AG04450 (cell line): ENCODE measurements at regions of chr5 and their contacts with region 1.

Region 1: GRCh38 chr5:10452768-10453331 is 11.2 kb downstream of the ROPN1L start:
- DNase-seq: peak; percentile 74
- H3K4me3 ChIP-seq: no peak overlapping the region
- H3K27ac ChIP-seq: no peak overlapping the region
- H3K27me3 ChIP-seq: no peaks in the 10 kb centered on the region
- CTCF ChIP-seq: peak; percentile 82

Region 2: GRCh38 chr5:10441083-10441991 is 11.5 kb before region 1 on chr5 and contains the start of gene ROPN1L:
- CTCF ChIA-PET with region 1: interaction called, 16 read pairs
- POLR2A ChIA-PET with region 1: no interaction called
- DNase-seq: peak; percentile 56
- H3K4me3 ChIP-seq: peak within 1 kb of the TSS; percentile 73
- H3K27ac ChIP-seq: peak within 1 kb of the TSS; percentile 66
- H3K27me3 ChIP-seq: no peaks in the 10 kb centered on the region
- CTCF ChIP-seq: no peak
- polyA plus RNA-seq, gene ROPN1L: 0.24 and 0.29 TPM in 2 replicates

Region 3: DNA sequence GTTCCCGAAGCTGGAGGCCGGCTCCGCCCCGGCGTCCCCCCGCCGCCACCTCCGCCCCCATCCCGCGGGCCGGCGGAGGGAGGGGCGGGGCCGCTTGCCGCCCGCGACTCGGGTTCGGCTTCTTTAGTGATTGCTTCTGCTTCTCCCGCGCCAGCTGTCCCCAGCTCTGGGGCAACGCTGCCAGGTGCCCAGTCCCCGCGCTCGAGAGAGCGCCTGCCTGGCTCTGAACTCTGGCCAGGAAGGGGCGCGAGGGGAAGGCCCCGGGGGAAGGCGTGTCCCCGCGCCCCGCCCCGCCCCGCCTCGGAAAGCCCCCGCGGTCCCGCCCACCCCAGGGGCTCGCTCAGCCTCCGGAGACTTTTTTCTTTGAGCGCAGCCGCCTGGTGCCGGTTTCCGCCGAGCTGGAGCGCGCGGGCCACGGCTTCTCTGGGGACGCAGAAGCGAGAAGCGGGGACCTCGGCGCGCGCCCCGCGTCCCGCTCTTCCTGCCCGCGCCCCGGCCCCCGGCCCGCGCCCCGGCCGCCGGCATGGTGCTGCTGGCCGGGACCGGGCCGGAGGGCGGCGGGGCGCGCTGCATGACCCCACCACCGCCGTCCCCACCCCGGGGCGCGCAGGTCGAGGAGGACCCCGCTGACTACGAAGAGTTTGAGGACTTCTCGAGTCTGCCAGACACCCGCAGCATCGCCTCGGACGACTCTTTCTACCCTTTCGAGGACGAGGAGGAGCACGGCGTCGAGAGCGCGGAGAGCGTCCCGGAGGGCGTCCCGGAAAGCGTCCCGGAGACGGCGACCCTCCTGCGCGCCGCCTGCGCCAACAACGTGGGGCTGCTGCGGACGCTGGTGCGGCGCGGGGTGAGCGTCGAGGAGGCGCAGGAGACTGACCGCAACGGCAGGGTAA is 111.3 kb after region 1 on chr5 and contains the start of gene ANKRD33B:
- CTCF ChIA-PET with region 1: interaction called, 12 read pairs
- POLR2A ChIA-PET with region 1: no interaction called
- DNase-seq: no peak
- H3K4me3 ChIP-seq: peak within 1 kb of the TSS; percentile 90
- H3K27ac ChIP-seq: peak within 1 kb of the TSS; percentile 65
- H3K27me3 ChIP-seq: no peaks in the 10 kb centered on the region
- CTCF ChIP-seq: no peak
- polyA plus RNA-seq, gene ANKRD33B: 4.6 and 4.8 TPM in 2 replicates

Region 4: DNA sequence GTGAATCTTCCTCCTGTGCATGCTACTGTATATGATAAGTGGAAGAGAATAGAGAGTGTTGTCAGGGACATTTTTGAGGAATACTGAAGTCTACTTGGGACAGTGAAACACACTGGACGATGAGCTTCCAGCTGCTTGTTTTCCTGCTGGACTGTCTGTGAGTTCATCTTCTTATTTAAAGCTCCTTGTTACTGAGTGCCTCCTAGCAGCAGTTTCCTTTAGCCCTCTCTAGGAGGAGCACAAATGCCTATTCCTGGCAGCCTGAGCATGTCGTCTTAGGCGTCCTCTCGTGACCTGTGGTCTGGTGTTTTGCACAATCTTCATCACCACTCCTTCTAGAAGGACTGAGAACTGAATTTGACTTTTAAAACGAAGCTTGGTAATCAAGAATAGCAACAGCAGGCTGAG is 154.8 kb after region 1 on chr5:
- CTCF ChIA-PET with region 1: interaction called, 10 read pairs
- POLR2A ChIA-PET with region 1: no interaction called
- DNase-seq: no peak
- H3K4me3 ChIP-seq: no peak overlapping the region
- H3K27ac ChIP-seq: peak overlapping the region; percentile 52
- H3K27me3 ChIP-seq: no peaks in the 10 kb centered on the region
- CTCF ChIP-seq: peak; percentile 37

Region 5: GRCh38 chr5:10635257-10635866 is 182.5 kb after region 1 on chr5:
- CTCF ChIA-PET with region 1: interaction called, 162 read pairs
- POLR2A ChIA-PET with region 1: no interaction called
- DNase-seq: no peak
- H3K4me3 ChIP-seq: no peak overlapping the region
- H3K27ac ChIP-seq: peak overlapping the region; percentile 31
- H3K27me3 ChIP-seq: no peaks in the 10 kb centered on the region
- CTCF ChIP-seq: no peak

Region 6: GRCh38 chr5:10689391-10690081 is 236.7 kb after region 1 on chr5:
- CTCF ChIA-PET with region 1: interaction called, 37 read pairs
- POLR2A ChIA-PET with region 1: no interaction called
- DNase-seq: no peak
- H3K4me3 ChIP-seq: no peak overlapping the region
- H3K27ac ChIP-seq: no peak overlapping the region
- H3K27me3 ChIP-seq: no peaks in the 10 kb centered on the region
- CTCF ChIP-seq: peak; percentile 37

Region 7: DNA sequence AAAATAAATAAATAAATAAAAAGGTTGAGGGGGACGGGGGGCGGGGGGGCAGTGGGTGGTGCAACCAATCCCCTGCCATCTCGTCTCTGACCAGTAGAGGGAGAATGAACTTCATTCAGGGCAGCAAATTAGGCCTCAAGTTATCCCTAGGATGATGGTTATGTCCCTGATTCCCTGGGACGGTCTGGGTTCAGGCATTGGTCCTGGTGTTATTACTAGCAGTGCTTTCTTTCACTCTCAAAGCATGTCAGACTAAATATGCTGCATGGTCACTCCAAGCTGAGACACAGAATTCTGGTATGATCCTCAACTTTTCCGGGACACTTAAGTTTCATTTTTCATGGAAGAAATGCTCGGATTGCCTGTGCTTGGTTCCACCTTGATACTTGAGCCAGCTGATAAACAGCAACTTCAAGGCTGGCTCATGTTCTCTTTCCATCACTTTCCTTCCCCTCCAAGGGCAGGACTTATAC is 248.8 kb after region 1 on chr5:
- CTCF ChIA-PET with region 1: interaction called, 17 read pairs
- POLR2A ChIA-PET with region 1: no interaction called
- DNase-seq: no peak
- H3K4me3 ChIP-seq: no peak overlapping the region
- H3K27ac ChIP-seq: peak overlapping the region; percentile 98
- H3K27me3 ChIP-seq: no peaks in the 10 kb centered on the region
- CTCF ChIP-seq: peak; percentile 55